ENCODE measurements at regions of chr11 and their contacts with region 1.

Region 1: DNA sequence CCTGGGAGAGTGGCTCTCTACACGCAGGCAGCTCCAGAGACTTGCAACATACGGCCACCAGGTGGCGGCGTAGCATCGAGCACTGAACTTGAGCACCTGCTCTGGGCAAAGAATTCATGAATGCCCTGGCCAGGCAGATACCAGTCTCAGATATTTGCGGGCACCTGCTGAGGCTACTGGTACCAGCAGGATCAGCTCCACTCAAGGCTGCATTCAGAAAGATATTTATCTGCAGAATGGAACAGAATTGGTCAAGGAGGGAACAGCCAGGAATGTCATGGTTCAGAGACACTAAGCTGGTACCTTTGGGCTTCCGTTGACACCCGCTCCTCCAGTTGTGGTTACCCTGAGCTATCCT is 10.8 kb upstream of the CCDC86 start:
- DNase-seq: no peak
- H3K4me3 ChIP-seq: no peak overlapping the region
- H3K27me3 ChIP-seq: peaks cover 7% of the 10 kb centered on the region; the same call in 1 of the 2 replicates
- CTCF ChIP-seq: peak; percentile 90

Region 2: DNA sequence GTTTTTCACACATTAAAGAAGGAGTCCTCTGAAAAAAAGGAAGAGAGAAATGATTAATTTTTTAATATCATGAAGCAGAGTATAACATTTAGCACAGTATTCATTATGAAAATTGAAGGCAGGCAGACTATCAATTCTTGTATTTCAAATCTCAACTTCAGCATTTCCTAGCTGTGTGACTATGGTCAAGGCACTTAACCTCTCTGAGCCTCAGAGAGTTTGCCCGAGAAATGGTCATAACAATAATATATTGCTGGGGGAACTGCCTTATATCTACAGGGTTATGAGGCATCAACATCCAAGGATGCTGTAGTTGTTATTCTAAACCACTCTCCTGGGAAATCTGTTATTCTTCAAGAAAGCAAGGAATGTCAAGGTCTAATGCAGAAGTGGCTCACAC is 105.5 kb before region 1 on chr11:
- CTCF ChIA-PET with region 1: no interaction called
- POLR2A ChIA-PET with region 1: no interaction called
- DNase-seq: no peak
- H3K4me3 ChIP-seq: no peak overlapping the region
- H3K27me3 ChIP-seq: no peaks in the 10 kb centered on the region
- CTCF ChIP-seq: no peak

Region 3: GRCh38 chr11:60775420-60775961 is 55.6 kb before region 1 on chr11:
- CTCF ChIA-PET with region 1: interaction called, 18 read pairs
- POLR2A ChIA-PET with region 1: no interaction called
- DNase-seq: peak; percentile 50
- H3K4me3 ChIP-seq: no peak overlapping the region
- H3K27me3 ChIP-seq: peaks cover 1% of the 10 kb centered on the region; the same call in 1 of the 2 replicates
- CTCF ChIP-seq: peak; percentile 92

Region 4: DNA sequence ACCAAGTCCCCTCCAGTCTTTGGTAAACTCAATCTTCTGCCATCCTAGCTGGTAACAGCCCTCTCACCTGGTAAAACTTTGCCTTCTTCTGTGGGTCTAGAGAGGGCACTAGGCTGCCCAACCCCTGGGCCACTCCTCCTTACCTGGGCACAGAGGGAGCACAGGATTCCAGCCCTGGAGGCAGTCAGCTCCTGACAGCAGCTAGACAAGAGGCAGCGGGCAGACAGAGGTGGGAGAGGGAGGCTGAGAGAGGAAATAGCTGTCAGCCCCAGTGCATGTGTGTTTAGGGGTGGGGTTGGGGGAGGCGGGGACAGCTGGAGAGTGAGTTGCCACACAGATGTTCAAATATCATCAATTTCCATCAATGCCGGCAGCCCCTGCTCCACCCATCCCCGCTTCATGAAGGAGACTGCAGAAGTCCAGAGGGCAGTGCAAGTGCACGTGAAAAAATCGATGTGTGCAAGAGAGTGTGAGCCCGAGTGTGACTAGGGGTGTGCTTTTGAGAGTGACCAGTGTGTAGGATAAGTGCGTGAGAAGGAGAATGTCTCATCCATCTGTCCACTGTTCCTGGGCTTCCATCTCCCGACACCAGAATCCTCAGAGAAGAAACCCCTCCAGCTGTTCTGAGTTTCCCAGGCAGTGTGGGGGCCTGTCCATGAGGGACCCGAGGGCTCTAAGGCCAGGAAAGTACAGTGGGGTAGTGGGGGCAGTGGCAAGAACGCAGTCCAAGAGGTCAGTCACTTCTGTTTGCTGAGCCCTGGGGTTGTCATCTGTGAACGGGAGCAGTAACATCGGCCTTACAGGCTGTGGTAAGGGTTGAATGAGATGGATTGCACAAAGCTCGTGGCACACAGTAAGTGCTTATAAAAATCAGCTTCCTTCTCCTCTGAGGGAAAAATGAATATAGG is 24.9 kb after region 1 on chr11 and contains the start of gene PTGDR2:
- CTCF ChIA-PET with region 1: interaction called, 12 read pairs
- POLR2A ChIA-PET with region 1: no interaction called
- DNase-seq: no peak
- H3K4me3 ChIP-seq: no peak within 1 kb of the TSS
- H3K27me3 ChIP-seq: peaks cover 1% of the 10 kb centered on the region; the same call in 1 of the 2 replicates
- CTCF ChIP-seq: no peak
- polyA plus RNA-seq, gene PTGDR2: 0.02 TPM in 2 replicates

Region 5: DNA sequence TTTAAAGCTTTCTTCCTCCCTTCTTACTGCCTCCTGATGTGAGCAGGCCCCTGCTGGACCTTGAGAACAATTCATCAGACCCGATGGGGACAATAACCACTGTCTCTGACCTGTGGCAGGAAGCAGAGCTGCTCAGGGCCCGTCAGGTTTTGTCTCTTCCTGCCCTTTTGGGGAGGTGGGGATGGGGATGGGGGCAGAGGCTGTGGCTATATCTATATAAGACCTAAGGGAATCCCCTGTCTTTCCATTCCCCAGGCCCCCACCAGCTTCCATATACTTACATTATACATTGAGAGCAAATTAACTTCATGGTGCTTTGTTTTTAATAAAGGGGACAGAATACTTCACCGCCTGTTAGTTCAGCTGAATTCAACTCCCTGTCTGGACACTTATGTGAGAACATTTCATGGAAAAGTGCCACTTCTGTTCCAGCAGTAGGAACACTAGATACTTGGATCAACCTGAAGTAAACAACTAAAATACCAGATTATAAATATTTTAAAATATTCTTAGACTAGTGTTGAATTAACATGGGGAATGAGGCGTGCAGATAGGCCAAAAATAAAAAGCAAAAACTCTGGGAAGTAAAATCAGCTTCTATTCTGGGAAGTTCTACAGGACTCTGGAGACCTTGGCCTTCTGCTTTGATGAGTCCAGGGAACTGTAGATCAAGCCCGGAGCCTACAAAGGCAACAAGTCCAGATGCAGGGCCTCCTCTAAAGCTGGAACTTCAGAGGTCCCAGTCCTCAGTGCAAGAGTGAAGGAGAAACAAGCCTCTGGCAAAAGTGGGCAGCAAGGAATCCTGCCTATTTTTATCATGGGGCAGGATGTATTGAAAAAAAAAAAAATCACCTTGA is 47.4 kb after region 1 on chr11:
- CTCF ChIA-PET with region 1: interaction called, 716 read pairs
- POLR2A ChIA-PET with region 1: no interaction called
- DNase-seq: no peak
- H3K4me3 ChIP-seq: no peak overlapping the region
- H3K27me3 ChIP-seq: no peaks in the 10 kb centered on the region
- CTCF ChIP-seq: no peak

Region 6: DNA sequence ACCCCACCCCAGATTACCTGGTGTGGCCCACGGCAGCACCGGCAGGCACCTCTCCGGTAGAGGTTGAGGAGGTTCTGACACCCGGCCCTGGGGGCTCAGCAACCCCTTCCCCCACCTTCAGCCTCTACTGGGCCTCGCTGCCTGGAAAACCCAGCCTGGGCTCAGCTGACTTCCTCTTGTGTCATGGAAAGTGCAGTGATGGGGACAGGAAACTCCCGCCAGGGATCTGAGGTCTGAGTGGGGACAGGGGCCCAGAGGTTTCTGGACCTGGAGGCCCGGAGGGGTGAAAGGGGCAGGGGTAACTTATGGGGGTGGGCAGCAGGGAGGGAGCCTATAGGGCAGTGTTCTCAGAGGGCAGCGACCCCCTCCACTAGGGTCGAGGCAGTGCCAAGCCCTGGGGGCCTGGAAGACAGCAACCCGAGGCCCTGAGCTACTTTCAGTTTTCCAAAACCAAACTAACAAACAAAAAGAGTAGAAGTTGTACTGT is 261.2 kb after region 1 on chr11:
- CTCF ChIA-PET with region 1: no interaction called
- POLR2A ChIA-PET with region 1: no interaction called
- DNase-seq: no peak
- H3K4me3 ChIP-seq: no peak overlapping the region
- H3K27me3 ChIP-seq: no peaks in the 10 kb centered on the region
- CTCF ChIP-seq: no peak

Region 7: DNA sequence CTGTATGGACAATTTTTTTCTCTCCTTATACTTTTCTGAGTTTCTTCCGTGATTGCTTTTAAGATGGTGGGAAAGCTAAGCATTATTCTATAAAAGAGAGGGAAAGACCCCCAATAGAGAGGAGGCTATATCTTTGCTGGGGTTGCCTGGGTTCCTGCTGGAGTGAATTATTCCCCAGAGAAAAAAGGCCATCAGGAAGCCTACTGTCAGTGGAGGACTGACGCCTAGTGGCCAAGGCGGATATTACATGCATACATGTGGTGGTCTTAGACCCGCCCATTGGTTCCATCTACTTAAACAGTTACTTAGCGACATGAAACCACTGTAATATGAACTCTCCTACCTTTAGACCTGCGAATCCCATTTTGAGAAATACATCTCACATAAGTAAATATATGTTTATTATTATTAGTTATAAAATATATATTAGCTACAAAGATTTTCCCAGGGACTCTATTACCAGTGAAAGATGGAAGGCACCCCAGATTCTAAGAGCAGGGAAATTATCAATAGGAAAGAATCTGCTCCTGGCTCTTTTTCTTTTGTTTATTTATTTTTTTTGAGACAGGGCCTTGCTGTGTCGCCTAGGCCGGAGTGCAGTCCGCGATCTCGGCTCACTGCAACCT is 356.5 kb after region 1 on chr11:
- CTCF ChIA-PET with region 1: interaction called, 20 read pairs
- POLR2A ChIA-PET with region 1: no interaction called
- DNase-seq: peak; percentile 16
- H3K4me3 ChIP-seq: no peak overlapping the region
- H3K27me3 ChIP-seq: no peaks in the 10 kb centered on the region; the same call in 1 of the 2 replicates
- CTCF ChIP-seq: peak; percentile 94

Measured in BJ (cell line).